Natural killer cell (primary cell): ENCODE measurements at regions of chr17 and their contacts with region 1.

Region 1: DNA sequence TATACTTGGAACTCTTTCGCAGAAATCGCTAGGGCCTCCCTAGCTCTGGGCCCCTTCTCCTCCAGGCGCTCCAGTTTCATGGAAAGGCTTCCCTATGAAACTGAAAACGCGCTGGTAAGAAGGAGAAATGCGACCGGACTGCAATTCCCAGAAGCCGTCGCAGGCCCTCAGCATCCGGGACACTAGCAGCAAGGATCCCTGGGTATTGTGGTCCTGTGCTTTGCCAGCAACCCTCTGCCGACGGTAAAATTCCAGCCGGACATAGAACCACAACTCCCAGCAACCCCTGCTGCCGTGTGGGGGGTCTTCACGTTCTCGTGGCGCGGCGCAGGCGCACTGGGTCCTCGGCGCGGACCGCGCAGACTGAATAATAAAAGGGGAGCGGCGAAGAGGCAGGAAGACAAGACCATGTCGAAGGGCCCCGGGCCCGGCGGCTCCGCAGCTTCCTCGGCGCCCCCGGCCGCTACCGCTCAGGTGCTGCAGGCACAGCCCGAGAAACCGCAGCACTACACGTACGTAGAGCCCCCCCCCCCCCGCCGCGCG is at the start of gene UNK:
- DNase-seq: peak; percentile 93 to 98
- ATAC-seq: peak; percentile 71 to 87 (median 74)
- H3K4me3 ChIP-seq: peak within 1 kb of the TSS; percentile 47
- H3K4me3 Mint-ChIP-seq: peak within 1 kb of the TSS; percentile 93
- H3K27ac ChIP-seq: peak within 1 kb of the TSS; percentile 96
- H3K27ac Mint-ChIP-seq: peak within 1 kb of the TSS; percentile 97 to 99
- H3K4me1 ChIP-seq: peaks cover 35% of the 10 kb centered on the region
- H3K4me1 Mint-ChIP-seq: peaks cover 43 to 46% of the 10 kb centered on the region in 2 donors
- H3K27me3 ChIP-seq: no peaks in the 10 kb centered on the region
- H3K27me3 Mint-ChIP-seq: peaks cover 0 to 3% of the 10 kb centered on the region in 2 donors
- CTCF ChIP-seq: no peak
- total RNA-seq, gene UNK: 44.2 to 51.3 (median 44.5) TPM

Region 2: DNA sequence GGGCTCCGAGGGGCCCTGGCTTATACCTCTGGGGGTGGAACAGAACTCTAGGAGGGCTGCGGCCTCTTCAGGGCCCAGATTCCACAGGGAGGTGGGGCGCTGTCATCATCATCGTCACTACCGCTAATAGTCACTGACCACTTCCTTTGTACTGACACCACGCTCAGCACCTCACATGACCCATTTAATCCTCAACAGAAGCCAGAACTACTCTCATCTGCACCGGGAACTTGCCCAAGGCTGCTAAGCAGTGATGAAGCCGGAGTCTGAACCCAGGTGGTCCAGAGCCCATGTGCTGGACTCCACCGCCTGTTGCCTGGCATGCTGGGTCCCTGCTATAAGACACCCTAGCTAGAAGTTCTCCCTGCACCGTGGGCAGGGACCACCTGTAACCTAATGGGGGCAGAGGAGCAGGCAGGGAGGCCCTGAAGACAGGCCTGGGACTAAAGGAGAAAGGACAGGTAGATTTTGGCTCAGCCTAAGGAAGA is 47.7 kb after region 1 on chr17:
- intact Hi-C with region 1: loop called (anchors 1 kb)
- DNase-seq: peak; percentile 71 to 84
- ATAC-seq: peak; percentile 68 to 87 (median 68)
- H3K4me3 ChIP-seq: peak overlapping the region; percentile 18
- H3K4me3 Mint-ChIP-seq: peak overlapping the region; percentile 85
- H3K27ac ChIP-seq: peak overlapping the region; percentile 94
- H3K27ac Mint-ChIP-seq: peak overlapping the region; percentile 97 to 99
- H3K4me1 ChIP-seq: peaks cover 59% of the 10 kb centered on the region
- H3K4me1 Mint-ChIP-seq: peaks cover 23 to 48% of the 10 kb centered on the region in 2 donors
- H3K27me3 ChIP-seq: no peaks in the 10 kb centered on the region
- H3K27me3 Mint-ChIP-seq: no peaks in the 10 kb centered on the region
- CTCF ChIP-seq: no peak

Region 3: DNA sequence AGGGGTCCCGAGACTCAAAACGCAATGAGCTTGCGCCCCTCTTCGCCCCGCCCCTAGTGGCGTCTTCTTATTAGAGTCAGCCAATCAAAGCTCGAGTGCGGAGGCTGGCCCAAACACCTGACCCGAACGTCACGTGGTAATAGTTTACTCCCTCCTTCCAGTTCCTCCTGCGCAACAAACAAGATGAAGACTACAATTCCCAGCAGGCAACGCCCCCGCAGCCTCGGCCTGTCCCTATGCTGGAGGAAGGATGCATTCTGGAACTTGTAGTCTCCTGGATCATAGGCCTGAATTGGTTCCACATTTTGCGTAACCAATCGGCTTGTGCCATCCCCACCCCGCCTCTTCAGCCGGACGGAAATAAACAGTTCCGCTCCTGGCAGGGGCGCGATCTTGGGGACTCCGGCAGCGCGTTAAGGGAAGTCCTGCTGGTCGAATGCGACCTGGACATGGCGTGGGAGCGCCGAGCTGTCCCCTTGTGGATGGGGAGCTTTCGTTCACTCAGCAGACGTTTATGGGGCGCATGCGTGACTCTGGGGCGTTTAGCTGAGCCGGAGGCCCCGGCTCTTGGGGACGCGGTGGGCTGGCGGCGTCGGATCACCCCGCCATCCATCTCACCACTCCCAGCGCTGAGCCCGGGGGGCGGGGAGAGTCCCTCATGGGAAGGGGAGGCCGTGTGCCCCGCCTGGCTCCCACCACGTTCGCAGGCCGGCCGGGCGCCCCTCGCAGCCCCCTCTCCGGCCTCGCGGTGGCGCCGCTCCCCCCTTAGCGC is 71.0 kb after region 1 on chr17 and contains the start of gene WBP2:
- intact Hi-C with region 1: loop called (anchors 1 kb)
- DNase-seq: peak; percentile 92 to 100
- ATAC-seq: peak; percentile 91 to 98 (median 91)
- H3K4me3 ChIP-seq: peak within 1 kb of the TSS; percentile 96
- H3K4me3 Mint-ChIP-seq: no peak within 1 kb of the TSS
- H3K27ac ChIP-seq: peak within 1 kb of the TSS; percentile 96
- H3K27ac Mint-ChIP-seq: no peak within 1 kb of the TSS
- H3K4me1 ChIP-seq: peaks cover 43% of the 10 kb centered on the region
- H3K4me1 Mint-ChIP-seq: peaks cover 7 to 27% of the 10 kb centered on the region in 2 donors
- H3K27me3 ChIP-seq: no peaks in the 10 kb centered on the region
- H3K27me3 Mint-ChIP-seq: no peaks in the 10 kb centered on the region
- CTCF ChIP-seq: peak; percentile 24
- total RNA-seq, gene WBP2: 81.1 to 106 (median 95.2) TPM

Region 4: DNA sequence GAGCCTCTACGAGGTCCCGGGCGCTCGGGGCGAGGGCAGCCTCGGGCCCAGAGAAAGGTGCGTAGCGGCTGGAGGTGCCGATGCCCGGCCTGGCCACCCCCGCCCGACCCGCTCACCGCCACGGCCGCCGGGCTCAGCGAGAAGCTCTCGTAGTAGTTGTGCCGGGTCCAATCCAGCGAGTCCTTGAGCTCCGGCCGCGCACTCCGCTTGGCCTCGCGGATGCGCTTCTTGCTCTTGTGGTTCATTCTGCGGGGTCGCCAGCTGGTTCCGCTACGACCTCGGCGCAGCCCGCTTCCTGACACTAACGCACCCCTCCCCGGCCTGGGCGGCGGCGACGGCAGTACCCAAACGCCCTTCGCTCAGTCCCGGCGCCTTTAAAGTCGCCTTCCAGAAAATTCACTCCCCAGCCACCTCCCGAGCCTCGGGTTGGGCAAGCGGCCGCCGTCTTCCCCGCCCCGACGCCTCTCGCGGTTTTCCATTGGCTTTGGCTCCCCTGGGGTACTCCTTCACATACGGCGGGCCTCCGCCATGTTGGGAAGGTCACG is 941.8 kb after region 1 on chr17 and contains the start of gene JMJD6:
- intact Hi-C with region 1: loop called (anchors 5 kb)
- DNase-seq: no peak
- ATAC-seq: peak in 1 of 3 donors; percentile 71
- H3K4me3 ChIP-seq: peak within 1 kb of the TSS; percentile 94
- H3K4me3 Mint-ChIP-seq: peak within 1 kb of the TSS; percentile 98
- H3K27ac ChIP-seq: peak within 1 kb of the TSS; percentile 90
- H3K27ac Mint-ChIP-seq: peak within 1 kb of the TSS; percentile 94 to 100
- H3K4me1 ChIP-seq: peaks cover 49% of the 10 kb centered on the region
- H3K4me1 Mint-ChIP-seq: peaks cover 29 to 33% of the 10 kb centered on the region in 2 donors
- H3K27me3 ChIP-seq: no peaks in the 10 kb centered on the region
- H3K27me3 Mint-ChIP-seq: no peaks in the 10 kb centered on the region
- CTCF ChIP-seq: no peak
- total RNA-seq, gene JMJD6: 169 to 257 (median 195) TPM